ENCODE measurements at regions of chr9 and their contacts with region 1.

Region 1: DNA sequence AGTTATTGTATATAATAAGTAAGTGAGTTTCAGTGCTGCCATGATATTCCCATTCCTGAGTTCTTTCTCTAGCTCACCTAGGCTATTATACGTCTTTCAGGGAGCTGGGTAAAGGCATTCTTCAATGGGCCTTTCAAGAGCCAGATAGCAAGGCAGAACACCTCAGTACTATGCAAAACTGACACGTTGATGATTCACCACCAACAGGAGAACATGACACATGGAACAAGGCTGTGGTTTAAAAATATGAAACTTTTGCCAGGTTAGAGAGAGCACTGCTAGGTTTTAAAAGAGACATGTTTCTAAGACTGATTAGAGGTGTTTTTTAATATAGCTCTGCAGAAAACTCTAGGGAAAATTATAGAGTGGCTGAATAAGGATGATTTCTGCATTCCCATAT is 95.9 kb downstream of the UGCG start:
- DNase-seq: no peak

Region 2: DNA sequence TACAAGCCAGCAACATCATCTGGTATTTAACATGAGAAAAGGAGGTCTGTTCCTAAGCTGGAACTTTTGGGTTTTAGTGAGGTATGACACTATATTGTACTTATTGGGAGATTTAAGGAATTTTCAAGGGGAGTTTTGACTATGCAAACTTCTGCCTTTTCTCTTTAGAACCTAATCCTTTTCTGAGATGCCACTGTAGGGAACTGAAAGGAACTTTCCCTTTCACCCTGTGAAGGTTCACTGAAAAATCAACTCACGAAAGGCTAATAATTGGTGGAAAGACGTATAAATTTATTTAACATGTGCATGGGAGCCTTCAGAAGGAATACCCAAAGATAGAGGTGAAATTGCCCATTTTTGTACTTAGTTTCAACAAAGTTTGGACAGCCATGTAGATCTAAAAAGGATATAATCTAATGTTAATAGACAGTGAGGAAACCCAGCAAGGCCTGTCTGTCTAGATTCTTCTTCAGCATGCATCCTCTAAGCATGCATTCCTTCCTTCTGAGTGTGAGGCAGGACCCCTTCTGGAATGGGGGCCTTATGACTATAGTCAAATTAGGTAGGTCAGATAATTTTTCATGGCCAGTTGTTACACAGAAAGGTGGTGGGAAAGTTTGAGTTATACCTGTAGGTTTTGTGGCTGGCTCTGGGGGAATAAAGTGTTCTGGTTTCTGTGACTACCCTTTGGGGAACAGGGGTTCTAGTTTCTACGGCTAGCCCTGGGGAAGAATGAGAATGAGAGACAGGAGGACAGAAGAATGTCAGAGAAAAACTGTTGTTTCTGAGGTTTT is 1984.8 kb before region 1 on chr9:
- intact Hi-C with region 1: loop called in 1 of 2 experiments (anchors 5 kb)
- DNase-seq: no peak

Region 3: DNA sequence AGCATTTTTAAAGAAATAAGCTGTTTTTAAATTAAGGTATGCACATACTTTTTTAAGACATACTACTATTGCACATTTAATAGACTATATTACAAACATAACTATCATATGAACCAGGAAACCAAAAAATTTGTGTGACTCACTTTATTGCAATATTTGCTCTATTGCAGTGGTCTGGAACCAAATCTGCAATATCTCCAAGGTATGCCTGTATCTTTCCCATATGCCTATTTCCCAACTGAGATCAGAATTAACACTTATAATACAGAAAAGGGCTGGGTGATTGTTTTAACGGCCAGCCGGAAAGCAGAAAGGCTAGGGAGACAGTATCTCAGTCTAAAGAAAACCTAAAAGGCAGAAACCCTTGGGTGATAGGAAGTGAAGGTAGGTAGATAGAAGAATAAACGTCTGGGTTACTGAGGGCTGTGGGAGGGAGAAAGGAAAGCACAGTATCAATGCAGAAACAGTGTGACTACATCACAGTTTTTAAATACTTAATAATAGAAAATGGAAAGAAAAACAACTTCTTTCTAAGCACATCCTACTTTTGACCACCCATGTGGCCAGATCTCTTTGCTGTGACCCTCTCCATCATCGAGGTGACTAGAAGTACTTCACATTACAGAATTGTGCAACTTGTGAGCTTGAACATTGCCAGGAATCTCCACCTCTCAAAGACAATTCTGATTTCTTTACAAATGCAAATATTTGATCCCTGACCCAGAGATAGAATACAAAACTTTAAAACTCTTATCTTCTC is 1080.7 kb before region 1 on chr9:
- intact Hi-C with region 1: no loop called
- DNase-seq: no peak

Region 4: DNA sequence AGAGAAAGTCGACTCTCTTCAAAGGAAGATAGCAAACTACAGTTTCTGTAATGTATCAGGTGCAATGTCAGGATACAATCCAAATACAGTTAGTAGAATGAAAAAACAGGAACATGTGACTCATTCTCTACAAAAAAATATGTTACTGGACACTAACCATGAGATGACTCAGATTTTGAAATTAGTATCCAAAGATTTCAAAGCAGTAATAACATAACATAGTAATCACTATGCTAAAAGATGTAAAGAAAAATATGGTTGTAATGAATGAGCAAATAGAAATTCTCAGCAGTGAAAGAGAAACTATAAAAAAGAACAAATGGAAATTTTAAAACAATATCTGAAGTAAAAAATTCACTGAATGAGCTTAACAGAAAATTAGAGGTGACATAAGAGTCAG is 240.1 kb before region 1 on chr9:
- intact Hi-C with region 1: no loop called
- DNase-seq: no peak

Region 5: DNA sequence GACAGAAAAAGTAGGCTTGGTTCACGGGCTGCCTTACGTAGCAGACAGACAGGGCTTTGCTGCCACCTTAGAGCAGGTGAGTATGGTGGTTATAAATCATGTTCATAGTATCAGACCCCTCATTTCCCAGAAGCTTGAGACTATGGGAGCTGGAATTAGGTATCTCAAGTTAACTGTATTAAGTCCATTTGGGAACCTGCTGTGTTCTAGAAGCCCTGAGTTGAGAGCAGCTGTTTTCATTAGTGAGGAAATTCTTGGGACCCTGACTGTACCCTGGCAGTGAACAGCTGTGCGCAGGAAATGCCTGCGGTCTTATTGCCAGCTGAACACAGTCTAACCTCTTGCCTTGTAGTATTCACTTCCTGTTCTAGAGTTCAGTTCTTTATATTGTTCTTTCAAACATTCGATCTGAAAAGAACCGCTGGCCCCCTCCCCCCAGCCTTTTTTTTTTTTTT is 66.1 kb before region 1 on chr9:
- intact Hi-C with region 1: no loop called
- DNase-seq: no peak

Region 6: GRCh38 chr9:112017878-112018277 is 25.4 kb after region 1 on chr9:
- intact Hi-C with region 1: loop called in 1 of 2 experiments (anchors 1 kb)
- DNase-seq: no peak